OCI-LY7 (cell line): ENCODE measurements at regions of chr1 and their contacts with region 1.

Region 1: GRCh38 chr1:54488779-54489626 is 59.0 kb upstream of the ACOT11 start:
- DNase-seq: peak; percentile 71
- H3K4me3 ChIP-seq: peak overlapping the region; percentile 71
- H3K27ac ChIP-seq: peak overlapping the region; percentile 59
- H3K4me1 ChIP-seq: peaks cover 31% of the 10 kb centered on the region
- CTCF ChIP-seq: peak; percentile 96

Region 2: DNA sequence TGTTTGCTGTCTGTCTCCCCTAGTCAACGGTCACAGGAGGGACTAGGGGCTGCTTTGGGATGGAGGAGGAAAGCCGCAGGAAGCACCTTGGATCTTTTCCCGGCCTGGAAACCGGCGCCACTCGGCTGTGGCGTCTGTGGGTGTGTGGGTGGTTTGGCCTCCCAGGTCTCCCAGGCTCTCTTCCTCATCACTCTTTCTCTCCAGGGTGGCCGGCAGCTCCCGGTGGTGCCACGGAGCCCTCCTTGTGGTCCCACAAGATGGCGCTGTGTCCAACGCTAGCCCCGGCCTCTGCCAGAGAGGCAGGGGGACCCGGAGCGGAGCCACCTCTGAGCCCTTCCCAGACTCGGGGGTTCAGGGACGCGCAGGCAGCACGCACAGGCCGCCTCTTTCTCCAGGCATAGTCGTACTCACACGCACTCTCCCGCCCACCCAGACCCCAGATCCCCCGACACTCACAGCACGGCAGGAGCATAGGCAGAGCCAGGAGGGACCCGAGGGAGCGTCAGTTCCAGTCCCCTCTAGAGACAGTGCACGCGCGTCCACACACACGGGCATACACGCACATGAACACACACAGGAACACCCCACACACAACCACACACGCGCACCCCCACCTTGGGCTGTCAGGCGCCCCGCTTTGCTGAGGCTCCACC is 367.4 kb before region 1 on chr1:
- CTCF ChIA-PET with region 1: interaction called, 4 read pairs
- POLR2A ChIA-PET with region 1: no interaction called
- intact Hi-C with region 1: loop called (anchors 1 kb)
- DNase-seq: peak; percentile 63
- H3K4me3 ChIP-seq: no peak overlapping the region
- H3K27ac ChIP-seq: no peak overlapping the region
- H3K4me1 ChIP-seq: peaks cover 5% of the 10 kb centered on the region
- CTCF ChIP-seq: peak; percentile 74

Region 3: DNA sequence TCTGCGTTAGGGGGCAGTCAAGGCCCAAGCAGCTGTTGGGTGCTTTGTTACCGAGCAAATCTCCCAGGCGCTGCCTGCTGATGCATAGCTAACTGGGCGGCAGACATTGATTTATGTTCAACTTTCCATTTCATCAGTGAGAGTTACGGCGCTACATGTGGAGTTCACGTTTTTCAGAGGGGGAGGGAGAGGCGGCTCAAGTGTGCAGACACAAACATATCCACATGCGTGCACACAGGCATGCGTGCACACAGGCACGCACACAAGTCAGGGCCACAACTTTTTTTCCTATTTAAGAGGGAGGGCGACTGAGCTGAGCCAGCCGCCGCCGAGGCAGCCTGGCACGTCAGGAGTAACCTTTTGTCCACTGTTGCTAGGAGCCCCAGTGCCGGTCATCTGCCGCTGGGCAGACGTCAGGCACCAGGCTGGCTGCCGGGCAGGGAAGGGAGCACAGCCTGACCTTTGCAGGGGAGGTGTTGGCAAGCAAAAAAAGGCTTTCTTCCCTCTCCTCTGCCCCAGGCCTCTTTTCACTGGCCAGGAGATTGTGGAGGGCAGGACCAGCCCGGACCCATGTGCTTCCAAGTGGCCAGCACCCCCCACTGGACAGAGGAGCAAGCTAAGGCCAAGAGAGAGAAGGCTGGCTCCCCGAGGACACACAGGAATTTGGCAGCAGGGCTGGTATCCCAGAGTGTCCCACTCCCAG is 215.8 kb before region 1 on chr1:
- CTCF ChIA-PET with region 1: no interaction called
- POLR2A ChIA-PET with region 1: interaction called, 3 read pairs
- intact Hi-C with region 1: loop called (anchors 1 kb)
- DNase-seq: peak; percentile 96
- H3K4me3 ChIP-seq: peak overlapping the region; percentile 35
- H3K27ac ChIP-seq: peak overlapping the region; percentile 18
- H3K4me1 ChIP-seq: peaks cover 17% of the 10 kb centered on the region
- CTCF ChIP-seq: peak; percentile 83; the same call in 1 of the 2 replicates

Region 4: DNA sequence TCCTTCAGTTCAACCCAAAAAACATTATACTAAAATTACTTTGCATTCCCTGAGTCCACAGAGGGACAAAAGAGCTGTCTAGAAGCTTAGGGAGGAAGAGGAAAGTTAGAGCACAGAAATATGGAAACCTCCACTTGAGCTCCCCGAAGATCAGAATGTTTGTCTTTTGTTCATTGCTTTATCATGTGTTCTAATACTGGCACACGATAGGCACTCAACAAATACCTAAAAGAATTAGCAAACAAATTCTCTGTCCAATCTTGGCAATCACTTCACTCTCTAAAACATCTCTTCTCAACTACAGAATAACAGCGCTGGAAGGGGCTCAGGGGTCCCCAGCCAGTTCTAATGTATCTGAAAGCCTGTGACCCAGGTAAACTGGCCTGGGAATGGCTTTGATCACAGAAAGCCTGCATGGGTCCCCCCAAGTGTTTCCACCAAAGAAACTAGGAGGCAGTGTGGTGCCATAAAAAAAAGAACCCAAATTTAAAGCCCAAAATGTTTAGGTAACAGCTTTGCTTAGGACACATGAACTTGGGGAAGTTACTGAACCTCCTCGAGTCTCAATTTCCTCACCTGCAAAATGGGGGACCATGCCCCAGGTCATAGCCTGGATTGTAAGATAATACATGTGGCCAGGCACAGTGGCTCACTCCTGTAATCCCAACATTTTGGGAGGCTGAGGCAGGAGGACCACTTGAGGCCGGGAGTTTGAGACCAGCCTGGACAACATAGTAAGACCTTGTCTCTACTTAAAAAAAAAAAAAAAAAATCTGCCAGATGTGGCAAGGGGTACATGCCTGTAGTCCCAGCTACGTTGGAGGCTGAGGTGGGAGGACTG is 128.6 kb before region 1 on chr1:
- CTCF ChIA-PET with region 1: no interaction called
- POLR2A ChIA-PET with region 1: interaction called, 4 read pairs
- intact Hi-C with region 1: loop called (anchors 1 kb)
- DNase-seq: peak; percentile 29
- H3K4me3 ChIP-seq: no peak overlapping the region
- H3K27ac ChIP-seq: no peak overlapping the region
- H3K4me1 ChIP-seq: peaks cover 72% of the 10 kb centered on the region
- CTCF ChIP-seq: peak; percentile 57

Region 5: DNA sequence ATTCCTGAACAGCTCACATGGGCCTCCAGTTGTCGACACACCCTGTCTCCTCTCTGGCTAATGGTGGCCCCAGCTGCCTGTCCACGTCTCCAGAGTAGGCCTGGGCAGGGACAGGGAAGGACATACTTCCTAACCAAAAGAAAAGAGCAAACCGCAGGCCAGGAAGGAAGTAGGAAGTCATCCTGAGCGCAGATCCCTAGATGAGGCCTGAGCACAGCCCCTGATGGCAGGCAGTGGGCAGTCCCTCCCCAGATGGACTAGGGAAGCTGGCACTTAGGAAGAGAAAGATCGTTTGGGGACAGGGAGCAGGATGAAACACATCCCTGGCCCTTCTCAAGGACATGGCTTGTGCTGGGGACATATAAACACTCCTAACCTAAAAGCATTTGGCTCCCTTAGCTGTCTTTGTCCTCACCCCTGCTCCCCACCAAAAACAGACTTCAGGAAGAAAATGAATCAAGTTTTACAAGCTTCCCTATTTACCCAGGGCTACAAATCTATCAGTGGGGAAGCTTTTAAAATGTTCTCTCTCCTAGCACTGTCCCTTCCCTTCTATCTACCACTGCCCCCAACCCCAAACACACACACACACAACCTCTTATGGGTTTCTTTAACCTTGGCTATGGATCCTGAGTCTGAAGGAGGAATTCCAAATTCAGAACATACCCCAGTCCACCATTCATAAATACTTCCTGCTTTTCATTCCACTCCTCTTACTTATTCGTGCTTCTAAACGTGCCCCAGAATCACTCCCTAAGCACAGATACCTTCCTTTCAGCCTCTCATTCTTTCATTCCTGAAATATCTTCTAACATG is 103.9 kb before region 1 on chr1:
- CTCF ChIA-PET with region 1: no interaction called
- POLR2A ChIA-PET with region 1: no interaction called
- intact Hi-C with region 1: no loop called
- DNase-seq: no peak
- H3K4me3 ChIP-seq: no peak overlapping the region
- H3K27ac ChIP-seq: no peak overlapping the region
- H3K4me1 ChIP-seq: peaks cover 7% of the 10 kb centered on the region
- CTCF ChIP-seq: no peak

Region 6: GRCh38 chr1:54406339-54407153 is 82.5 kb before region 1 on chr1 and contains the start of gene SSBP3:
- CTCF ChIA-PET with region 1: no interaction called
- POLR2A ChIA-PET with region 1: interaction called, 32 read pairs
- intact Hi-C with region 1: loop called (anchors 1 kb)
- DNase-seq: peak; percentile 93
- H3K4me3 ChIP-seq: peak within 1 kb of the TSS; percentile 91
- H3K27ac ChIP-seq: peak within 1 kb of the TSS; percentile 87
- H3K4me1 ChIP-seq: peaks cover 51% of the 10 kb centered on the region
- CTCF ChIP-seq: peak; percentile 43
- total RNA-seq, gene SSBP3: 11.2 and 16.5 TPM in 2 replicates

Region 7: DNA sequence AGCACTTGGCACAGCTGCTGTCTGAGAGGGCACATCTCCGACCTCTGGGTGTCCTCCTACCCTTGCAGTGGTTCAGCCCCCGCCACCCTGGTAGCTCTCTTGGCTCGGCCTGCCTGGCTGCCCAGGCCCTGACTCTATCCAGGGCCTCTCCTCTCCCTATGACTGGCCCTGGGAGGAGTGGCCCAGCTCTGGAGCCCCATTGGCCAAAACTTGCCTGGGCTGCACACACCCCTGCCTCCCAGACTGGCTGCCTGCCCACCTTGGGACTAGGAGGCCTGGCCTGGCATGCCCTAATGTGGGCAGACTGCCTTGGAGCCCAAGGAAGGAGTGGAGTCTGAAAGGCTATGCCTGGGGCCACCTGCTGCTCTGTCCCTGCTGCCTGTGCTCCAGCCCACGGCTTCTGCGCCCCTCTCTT is 92.6 kb after region 1 on chr1:
- CTCF ChIA-PET with region 1: no interaction called
- POLR2A ChIA-PET with region 1: no interaction called
- intact Hi-C with region 1: no loop called
- DNase-seq: no peak
- H3K4me3 ChIP-seq: no peak overlapping the region
- H3K27ac ChIP-seq: no peak overlapping the region
- H3K4me1 ChIP-seq: no peaks in the 10 kb centered on the region
- CTCF ChIP-seq: no peak